ENCODE measurements at regions of chr1 and their contacts with region 1.

Region 1: GRCh38 chr1:8727809-8728213 is 89.6 kb downstream of the RERE start:
- DNase-seq: no peak
- ATAC-seq: no peak
- H3K4me3 ChIP-seq: no peak overlapping the region
- H3K27ac ChIP-seq: no peak overlapping the region
- H3K4me1 ChIP-seq: peaks cover 13% of the 10 kb centered on the region; the same call in 2 of the 3 replicates
- CTCF ChIP-seq: no peak
- EP300 ChIP-seq: no peak
- POLR2A ChIP-seq: no peak
- RAD21 ChIP-seq: no peak

Region 2: DNA sequence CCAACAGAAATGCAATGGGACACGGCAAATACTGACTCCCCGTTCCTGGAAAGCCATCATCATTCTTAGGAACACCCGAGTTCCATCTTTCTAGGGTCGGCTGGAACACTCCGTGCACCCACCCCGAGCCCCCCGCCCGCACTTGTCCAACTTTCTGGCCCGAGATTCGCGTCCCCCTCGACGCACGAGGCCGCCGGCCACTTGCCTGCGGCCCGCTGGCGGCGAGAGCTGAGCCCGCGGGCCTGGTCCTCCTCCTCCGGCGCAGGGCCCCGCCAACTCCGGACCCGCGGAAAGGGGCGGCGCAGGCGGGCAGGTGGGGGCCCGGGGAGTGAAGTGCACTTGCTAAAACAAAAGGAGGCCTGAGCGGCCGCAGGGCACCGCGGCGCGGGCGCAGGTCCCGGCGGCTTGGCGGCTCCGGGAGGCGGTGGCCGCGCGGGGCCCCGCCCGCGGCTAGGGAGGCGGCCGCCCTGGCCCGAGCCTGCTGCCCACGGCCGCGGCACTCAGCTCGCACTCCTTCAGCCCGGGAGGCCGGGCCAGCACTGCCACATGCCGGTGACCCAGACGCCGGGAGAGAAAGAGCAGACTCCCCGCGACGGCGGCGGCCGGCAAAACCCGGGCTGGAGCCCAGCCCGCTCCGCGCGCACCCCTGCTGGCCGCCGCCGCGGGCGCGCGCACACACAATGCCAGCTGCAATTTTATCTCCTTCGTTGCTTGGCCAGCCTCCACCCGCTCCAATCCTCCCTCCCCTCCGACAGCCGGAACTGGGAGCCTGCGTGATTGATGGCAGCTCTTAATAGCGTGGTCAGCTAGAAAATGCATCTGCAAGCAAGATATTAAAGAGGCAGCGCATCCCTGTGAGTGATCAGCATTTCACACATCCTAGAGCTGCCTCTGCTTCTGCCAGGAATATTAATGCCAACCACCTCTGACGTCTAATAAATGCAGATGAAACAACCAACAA is 24.7 kb before region 1 on chr1:
- CTCF ChIA-PET with region 1: interaction called, 13 read pairs
- POLR2A ChIA-PET with region 1: no interaction called
- DNase-seq: peak; percentile 74 to 92
- ATAC-seq: peak; percentile 86 to 96
- H3K4me3 ChIP-seq: peak overlapping the region; percentile 71
- H3K27ac ChIP-seq: peak overlapping the region; percentile 91 to 98
- H3K4me1 ChIP-seq: peaks cover 60% of the 10 kb centered on the region
- CTCF ChIP-seq: no peak
- EP300 ChIP-seq: no peak
- POLR2A ChIP-seq: peak; percentile 72
- RAD21 ChIP-seq: peak; percentile 11 to 47; a peak in 2 of 5 replicates

Region 3: DNA sequence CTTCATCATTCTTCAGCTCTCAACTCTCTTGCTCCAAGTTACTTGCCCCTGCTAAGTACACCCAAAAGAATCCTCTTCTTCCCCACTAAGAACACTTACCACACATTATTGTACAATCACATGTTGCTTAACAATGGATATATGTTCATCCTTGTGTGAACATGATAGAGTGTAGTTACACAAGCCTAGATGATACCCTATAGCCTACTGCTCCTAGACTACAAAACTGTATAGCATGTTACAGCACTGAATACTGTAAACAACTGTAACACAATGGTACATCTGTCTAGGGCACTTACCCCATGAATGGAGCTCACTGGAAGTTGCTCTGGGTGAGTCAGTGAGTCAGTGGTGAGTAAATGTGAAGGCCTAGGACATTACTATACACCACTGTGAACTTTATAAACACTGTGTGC is 12.2 kb after region 1 on chr1:
- CTCF ChIA-PET with region 1: interaction called, 18 read pairs
- POLR2A ChIA-PET with region 1: no interaction called
- DNase-seq: no peak
- ATAC-seq: no peak
- H3K4me3 ChIP-seq: no peak overlapping the region
- H3K27ac ChIP-seq: no peak overlapping the region
- H3K4me1 ChIP-seq: peaks cover 9% of the 10 kb centered on the region; the same call in 2 of the 3 replicates
- CTCF ChIP-seq: no peak
- EP300 ChIP-seq: no peak
- POLR2A ChIP-seq: no peak
- RAD21 ChIP-seq: no peak

Measured in A549 (cell line).